ENCODE measurements at regions of chr11 and their contacts with region 1.

Region 1: DNA sequence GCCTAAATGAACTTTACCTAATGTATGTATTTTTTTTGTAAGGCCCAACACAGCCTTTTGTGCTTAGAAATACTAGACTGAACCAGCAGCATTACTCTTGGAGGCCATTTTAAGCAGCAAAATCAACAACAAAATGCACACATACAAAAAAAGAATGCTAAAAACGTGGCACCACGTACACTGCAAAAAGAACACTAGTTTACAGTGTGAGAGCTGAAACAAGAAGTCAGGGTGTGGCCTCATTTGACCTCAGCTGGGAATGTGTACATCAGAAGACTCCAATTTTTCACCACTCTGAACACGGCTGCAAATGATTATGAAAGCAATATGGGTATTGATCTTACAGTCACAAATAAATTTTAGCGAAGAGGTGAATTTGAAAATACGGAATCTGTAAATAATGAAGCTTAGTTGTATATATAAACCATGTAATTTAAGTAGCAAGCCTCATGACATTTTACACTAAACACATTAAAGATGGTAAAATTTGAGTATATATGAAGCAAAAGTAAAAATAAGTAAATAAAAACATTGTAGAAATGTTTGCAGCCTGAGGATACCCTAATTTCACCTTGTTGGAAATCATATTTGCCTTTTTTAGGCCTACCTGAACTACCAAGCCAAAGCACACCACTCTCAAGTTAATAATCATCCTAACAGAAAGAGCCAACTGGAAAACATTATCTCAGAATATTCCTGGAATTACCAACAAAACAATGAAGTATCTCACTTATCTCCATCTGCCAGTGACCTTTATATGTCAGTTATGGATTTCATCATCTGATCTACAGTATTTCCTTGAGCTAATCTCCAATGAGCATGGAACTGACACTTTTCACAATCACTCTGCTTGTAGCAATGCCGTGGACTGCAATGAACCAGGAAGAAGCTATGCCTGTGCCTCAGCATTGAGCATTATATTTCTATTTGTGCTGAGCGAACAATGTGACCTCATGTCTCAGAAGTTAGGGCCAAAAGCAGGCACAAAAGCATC is 319.5 kb upstream of the FAT3 start:
- DNase-seq: no peak
- H3K4me3 ChIP-seq: no peak overlapping the region
- H3K27ac ChIP-seq: no peak overlapping the region
- H3K4me1 ChIP-seq: no peaks in the 10 kb centered on the region
- H3K27me3 ChIP-seq: no peaks in the 10 kb centered on the region
- CTCF ChIP-seq: no peak
- EP300 ChIP-seq: no peak
- POLR2A ChIP-seq: no peak

Region 2: GRCh38 chr11:91365986-91366585 is 539.0 kb before region 1 on chr11:
- intact Hi-C with region 1: loop called in 1 of 4 experiments (anchors 5 kb)
- DNase-seq: no peak
- H3K4me3 ChIP-seq: no peak overlapping the region
- H3K27ac ChIP-seq: no peak overlapping the region
- H3K4me1 ChIP-seq: no peaks in the 10 kb centered on the region
- H3K27me3 ChIP-seq: no peaks in the 10 kb centered on the region
- CTCF ChIP-seq: no peak
- EP300 ChIP-seq: no peak
- POLR2A ChIP-seq: no peak

Region 3: DNA sequence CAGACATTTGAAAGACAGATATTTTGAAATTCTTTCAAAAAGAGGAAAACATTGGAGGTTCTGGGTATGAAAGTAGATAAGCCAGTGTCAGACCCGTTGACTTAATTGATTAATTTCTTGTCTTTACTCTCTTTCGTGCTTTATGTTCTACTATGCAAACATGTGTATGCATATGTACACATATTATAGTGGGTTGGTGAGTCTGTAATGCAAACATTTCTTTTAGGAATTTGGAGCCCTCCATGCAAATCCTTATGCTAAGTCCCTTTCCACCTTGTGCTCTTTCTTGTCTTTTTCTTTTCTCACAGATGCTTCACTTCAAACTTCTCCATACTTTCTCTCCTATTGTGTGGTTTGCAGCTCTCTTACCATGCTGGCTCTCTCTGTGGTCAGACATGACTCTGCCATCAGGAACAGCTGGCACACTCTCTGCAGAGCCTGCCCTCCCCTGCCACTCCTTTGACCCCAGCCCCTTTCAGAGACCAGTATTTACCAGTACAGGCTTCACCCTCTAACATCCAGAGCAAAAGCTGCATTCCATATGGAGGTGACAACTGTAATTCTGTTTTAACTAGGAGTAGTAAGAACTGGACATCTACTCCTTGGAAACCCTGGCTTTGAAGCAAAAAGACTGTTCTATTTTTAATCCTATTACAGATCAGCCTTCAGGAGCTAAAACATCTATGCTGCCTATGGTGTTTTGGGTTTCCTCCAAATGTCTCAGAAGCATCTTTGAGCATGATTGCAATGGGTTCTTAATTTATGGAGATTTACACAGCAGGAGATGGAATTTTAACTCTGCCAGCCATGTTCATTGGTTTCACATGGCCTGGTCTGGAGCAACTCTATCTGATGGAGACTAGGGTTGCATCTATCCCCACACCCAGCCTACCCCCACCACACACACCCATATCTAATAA is 67.4 kb before region 1 on chr11:
- intact Hi-C with region 1: no loop called
- DNase-seq: no peak
- H3K4me3 ChIP-seq: no peak overlapping the region
- H3K27ac ChIP-seq: no peak overlapping the region
- H3K4me1 ChIP-seq: no peaks in the 10 kb centered on the region
- H3K27me3 ChIP-seq: no peaks in the 10 kb centered on the region
- CTCF ChIP-seq: no peak
- EP300 ChIP-seq: no peak
- POLR2A ChIP-seq: no peak

Measured in ovary (tissue), 10 donors.